CD4-positive, alpha-beta T cell (primary cell): ENCODE measurements at regions of chr10 and their contacts with region 1.

Region 1: GRCh38 chr10:90871766-90872647 is at the start of gene RPP30:
- DNase-seq: peak; percentile 67 to 88 (median 74)
- ATAC-seq: peak; percentile 98
- H3K4me3 ChIP-seq: peak within 1 kb of the TSS; percentile 95
- H3K4me3 Mint-ChIP-seq: peak within 1 kb of the TSS; percentile 96
- H3K27ac ChIP-seq: peak within 1 kb of the TSS; percentile 31 to 46
- H3K27ac Mint-ChIP-seq: peak within 1 kb of the TSS; percentile 84
- H3K4me1 ChIP-seq: peaks cover 16% of the 10 kb centered on the region
- H3K4me1 Mint-ChIP-seq: peaks cover 38% of the 10 kb centered on the region
- H3K27me3 ChIP-seq: peaks cover 0 to 22% of the 10 kb centered on the region in 2 experiments
- H3K27me3 Mint-ChIP-seq: peaks cover 33% of the 10 kb centered on the region
- CTCF ChIP-seq: no peak
- total RNA-seq, gene RPP30: 25.3 to 28.5 TPM

Region 2: DNA sequence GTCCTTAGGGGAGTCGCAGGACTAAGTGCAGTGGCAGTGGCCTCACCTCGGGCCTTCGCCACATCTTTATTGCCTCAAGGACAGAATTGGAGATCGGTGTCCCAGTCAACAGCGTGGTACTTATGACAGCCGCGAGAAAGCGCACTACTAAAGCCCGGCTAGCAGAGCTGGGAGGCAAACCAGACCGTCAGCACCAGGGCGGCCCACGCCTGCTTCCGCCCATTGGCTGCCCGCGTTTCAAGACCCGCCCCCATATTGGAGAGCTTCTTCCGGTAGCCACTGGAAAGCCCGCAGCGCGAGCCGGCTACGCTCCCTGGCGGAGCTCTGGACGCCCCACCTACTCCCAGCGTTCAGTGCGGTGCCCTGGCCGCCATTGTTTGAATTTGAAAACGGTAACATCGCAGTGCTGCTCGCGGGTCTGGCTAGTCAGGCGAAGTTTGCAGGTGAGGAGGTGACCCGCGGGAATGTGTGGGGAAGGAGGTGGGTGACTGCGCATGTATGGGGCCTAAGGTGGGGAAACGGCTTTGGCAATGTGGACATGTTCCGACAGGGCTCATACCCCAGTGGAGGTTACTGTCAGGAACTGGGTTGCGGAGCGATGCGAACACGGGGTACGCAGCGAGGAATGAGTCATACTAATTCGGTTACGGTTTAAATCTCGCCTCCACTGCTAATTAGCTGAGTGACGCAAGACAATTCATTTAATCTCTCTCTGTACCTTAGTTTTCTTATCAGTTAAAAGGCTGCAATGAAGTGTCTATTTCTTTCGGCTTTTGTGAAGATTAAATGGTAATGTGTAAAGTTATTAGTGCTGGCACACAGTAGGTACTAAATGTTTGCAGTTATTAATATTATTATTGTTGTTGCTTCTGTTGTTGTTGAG is 1170.5 kb before region 1 on chr10 and contains the start of gene KIF20B:
- CTCF ChIA-PET with region 1: no interaction called
- POLR2A ChIA-PET with region 1: interaction called, 4 read pairs
- intact Hi-C with region 1: loop called in 1 of 2 experiments (anchors 10 kb)
- DNase-seq: peak; percentile 90 to 98 (median 93)
- ATAC-seq: peak; percentile 95
- H3K4me3 ChIP-seq: peak within 1 kb of the TSS; percentile 87
- H3K4me3 Mint-ChIP-seq: peak within 1 kb of the TSS; percentile 97
- H3K27ac ChIP-seq: peak within 1 kb of the TSS; percentile 73 to 78
- H3K27ac Mint-ChIP-seq: peak within 1 kb of the TSS; percentile 99
- H3K4me1 ChIP-seq: peaks cover 9% of the 10 kb centered on the region
- H3K4me1 Mint-ChIP-seq: peaks cover 44% of the 10 kb centered on the region
- H3K27me3 ChIP-seq: no peaks in the 10 kb centered on the region
- H3K27me3 Mint-ChIP-seq: no peaks in the 10 kb centered on the region
- CTCF ChIP-seq: peak; percentile 24
- total RNA-seq, gene KIF20B: 17.1 to 18.4 TPM

Region 3: GRCh38 chr10:90526721-90527120 is 345.3 kb before region 1 on chr10:
- CTCF ChIA-PET with region 1: no interaction called
- POLR2A ChIA-PET with region 1: no interaction called
- intact Hi-C with region 1: no loop called
- DNase-seq: no peak
- ATAC-seq: no peak
- H3K4me3 ChIP-seq: no peak overlapping the region
- H3K4me3 Mint-ChIP-seq: no peak overlapping the region
- H3K27ac ChIP-seq: no peak overlapping the region
- H3K27ac Mint-ChIP-seq: no peak overlapping the region
- H3K4me1 ChIP-seq: no peaks in the 10 kb centered on the region
- H3K4me1 Mint-ChIP-seq: no peaks in the 10 kb centered on the region
- H3K27me3 ChIP-seq: no peaks in the 10 kb centered on the region
- H3K27me3 Mint-ChIP-seq: peaks cover 10% of the 10 kb centered on the region
- CTCF ChIP-seq: no peak

Region 4: DNA sequence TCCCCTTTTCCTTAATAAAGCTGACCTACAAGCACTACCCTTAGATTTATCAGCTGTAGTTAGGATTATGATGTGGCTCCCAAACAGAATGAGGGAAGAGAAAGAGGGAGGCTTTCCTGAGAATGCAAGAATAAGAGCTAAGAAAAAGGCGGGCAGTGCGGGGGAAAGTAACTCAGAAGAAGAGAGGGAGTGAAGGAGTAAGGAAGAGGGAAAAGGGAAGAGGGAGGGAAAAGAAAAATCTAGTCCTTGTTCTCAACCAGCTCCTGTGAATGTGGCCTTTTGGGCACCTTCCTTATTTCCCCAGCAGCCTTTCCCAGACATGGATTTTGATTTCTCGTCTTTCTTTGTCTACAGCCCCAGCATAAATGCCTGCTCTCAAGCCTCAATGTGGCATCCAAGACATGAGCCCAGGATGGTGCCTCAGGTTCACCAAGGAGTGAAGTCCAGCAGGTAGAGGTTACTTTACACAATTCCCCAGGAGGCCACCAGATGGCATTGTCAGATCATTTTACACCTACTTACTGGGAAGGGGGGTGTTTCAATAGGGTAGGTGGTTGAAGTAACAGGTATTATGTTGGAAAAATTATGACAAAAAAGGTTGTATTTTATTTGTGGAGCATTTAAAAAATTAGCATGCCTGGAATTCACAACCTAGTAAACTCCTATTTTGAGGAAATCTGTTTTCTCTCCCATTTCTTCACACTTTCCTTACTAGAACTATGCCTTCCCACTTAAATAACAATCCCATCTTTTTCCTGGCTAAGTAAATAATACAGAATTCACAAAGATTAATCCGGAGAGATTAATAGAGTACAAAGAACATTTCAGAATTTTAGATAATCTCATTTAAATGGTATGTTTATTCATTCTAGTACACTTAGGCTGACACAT is 120.7 kb before region 1 on chr10:
- CTCF ChIA-PET with region 1: no interaction called
- POLR2A ChIA-PET with region 1: no interaction called
- intact Hi-C with region 1: loop called in 1 of 2 experiments (anchors 2 kb)
- DNase-seq: peak in 13 of 14 experiments; percentile 4 to 63 (median 20)
- ATAC-seq: no peak
- H3K4me3 ChIP-seq: no peak overlapping the region
- H3K4me3 Mint-ChIP-seq: no peak overlapping the region
- H3K27ac ChIP-seq: no peak overlapping the region
- H3K27ac Mint-ChIP-seq: no peak overlapping the region
- H3K4me1 ChIP-seq: no peaks in the 10 kb centered on the region
- H3K4me1 Mint-ChIP-seq: no peaks in the 10 kb centered on the region
- H3K27me3 ChIP-seq: peaks cover 5 to 17% of the 10 kb centered on the region in 2 experiments
- H3K27me3 Mint-ChIP-seq: peaks cover 47% of the 10 kb centered on the region
- CTCF ChIP-seq: peak; percentile 60

Region 5: DNA sequence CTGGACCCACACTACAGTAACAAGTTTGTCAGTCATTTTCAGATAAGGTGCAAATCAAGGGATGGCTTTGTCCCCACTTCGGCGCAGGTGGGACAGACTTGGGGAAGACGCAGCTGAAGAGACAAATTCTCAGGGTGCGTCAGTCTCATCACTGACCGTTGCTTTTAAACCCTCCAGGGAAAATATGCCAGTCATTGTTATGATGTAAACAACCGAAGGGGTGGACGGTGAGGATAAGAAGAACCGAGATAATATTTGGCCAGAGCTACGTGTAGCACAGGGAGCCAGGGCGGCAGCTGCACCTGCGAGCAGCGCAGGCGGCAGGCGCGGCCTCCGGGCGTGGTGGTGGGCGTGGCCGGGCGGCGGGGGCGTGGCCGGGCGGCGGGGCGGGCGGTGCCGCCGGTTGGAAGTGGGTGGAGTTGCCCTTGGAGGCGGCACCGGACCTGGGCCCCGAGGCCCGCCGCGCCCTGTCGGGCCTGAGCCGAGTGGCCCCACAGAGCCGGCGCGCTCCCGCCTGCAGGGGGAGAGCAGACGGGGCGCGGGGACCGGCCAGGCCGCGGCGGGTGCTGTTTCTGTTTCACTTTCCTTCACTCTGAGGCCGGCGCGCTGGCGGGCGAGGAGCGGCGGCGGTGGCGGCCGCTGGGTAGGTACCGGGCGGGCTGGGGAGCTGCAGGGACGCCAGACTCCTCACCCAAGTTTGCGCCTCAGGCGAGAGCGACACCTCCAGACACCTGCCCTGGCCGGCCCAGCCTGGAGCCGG is 348.4 kb after region 1 on chr10 and contains the start of gene PCGF5:
- CTCF ChIA-PET with region 1: no interaction called
- POLR2A ChIA-PET with region 1: no interaction called
- intact Hi-C with region 1: loop called in 1 of 2 experiments (anchors 10 kb)
- DNase-seq: peak; percentile 81 to 96 (median 91)
- ATAC-seq: peak; percentile 94
- H3K4me3 ChIP-seq: peak within 1 kb of the TSS; percentile 59
- H3K4me3 Mint-ChIP-seq: peak within 1 kb of the TSS; percentile 89
- H3K27ac ChIP-seq: peak within 1 kb of the TSS in 1 of 2 donors; percentile 65
- H3K27ac Mint-ChIP-seq: peak within 1 kb of the TSS; percentile 84
- H3K4me1 ChIP-seq: peaks cover 21% of the 10 kb centered on the region
- H3K4me1 Mint-ChIP-seq: peaks cover 44% of the 10 kb centered on the region
- H3K27me3 ChIP-seq: no peaks in the 10 kb centered on the region
- H3K27me3 Mint-ChIP-seq: no peaks in the 10 kb centered on the region
- CTCF ChIP-seq: no peak
- total RNA-seq, gene PCGF5: 57.7 to 58.4 TPM

Region 6: DNA sequence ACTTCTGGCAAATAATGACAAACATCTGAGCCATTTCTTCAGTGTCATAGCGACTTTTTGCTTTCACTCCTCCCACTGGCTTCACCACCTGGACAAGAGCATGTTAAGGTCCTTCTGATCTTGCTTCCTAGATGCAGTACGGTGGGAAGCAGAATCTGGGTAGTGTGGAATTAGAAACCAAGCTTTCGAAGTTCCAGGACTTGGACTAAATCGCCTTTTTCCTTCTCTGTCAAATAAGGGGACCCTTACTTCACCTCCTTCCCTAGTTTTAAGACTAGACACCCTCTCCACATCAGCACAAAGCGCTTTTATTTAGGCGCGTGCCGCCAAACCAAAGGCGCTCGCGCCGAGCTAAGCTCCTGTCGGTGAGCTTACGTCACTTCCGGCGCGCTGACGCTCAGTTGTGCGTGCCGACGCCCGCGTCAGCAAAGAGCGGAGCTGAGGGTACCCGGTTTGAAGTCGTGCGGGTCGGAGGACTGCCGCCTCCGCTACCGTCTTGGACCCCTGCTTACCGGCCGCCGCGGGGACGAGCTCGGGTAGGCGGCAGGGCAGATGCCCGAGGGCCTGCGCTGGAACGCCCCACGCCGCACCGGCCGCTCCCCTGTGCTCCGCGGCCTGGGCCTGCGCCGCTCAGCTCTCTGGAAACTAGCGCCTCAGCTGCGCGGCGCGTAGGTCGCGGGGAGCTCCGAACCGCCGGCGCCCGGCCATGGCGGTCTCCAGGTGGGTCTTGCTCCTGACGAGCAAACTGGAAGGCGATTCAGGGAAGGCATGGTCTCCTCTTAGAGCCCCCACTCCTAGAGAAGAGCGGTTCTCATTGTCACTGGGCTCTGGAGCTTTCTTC is 1051.6 kb after region 1 on chr10 and contains the start of gene BTAF1:
- CTCF ChIA-PET with region 1: no interaction called
- POLR2A ChIA-PET with region 1: interaction called, 4 read pairs
- intact Hi-C with region 1: loop called (anchors 10 kb)
- DNase-seq: peak; percentile 84 to 98 (median 90)
- ATAC-seq: peak; percentile 93
- H3K4me3 ChIP-seq: peak within 1 kb of the TSS; percentile 86
- H3K4me3 Mint-ChIP-seq: peak within 1 kb of the TSS; percentile 98
- H3K27ac ChIP-seq: peak within 1 kb of the TSS; percentile 93 to 97
- H3K27ac Mint-ChIP-seq: peak within 1 kb of the TSS; percentile 98
- H3K4me1 ChIP-seq: peaks cover 20% of the 10 kb centered on the region
- H3K4me1 Mint-ChIP-seq: peaks cover 47% of the 10 kb centered on the region
- H3K27me3 ChIP-seq: peaks cover 4 to 6% of the 10 kb centered on the region in 2 experiments
- H3K27me3 Mint-ChIP-seq: peaks cover under 1% of the 10 kb centered on the region
- CTCF ChIP-seq: no peak
- total RNA-seq, gene BTAF1: 80.8 to 85.8 TPM